CD4-positive, alpha-beta memory T cell (primary cell): ENCODE measurements at regions of chr16 and their contacts with region 1.

Region 1: DNA sequence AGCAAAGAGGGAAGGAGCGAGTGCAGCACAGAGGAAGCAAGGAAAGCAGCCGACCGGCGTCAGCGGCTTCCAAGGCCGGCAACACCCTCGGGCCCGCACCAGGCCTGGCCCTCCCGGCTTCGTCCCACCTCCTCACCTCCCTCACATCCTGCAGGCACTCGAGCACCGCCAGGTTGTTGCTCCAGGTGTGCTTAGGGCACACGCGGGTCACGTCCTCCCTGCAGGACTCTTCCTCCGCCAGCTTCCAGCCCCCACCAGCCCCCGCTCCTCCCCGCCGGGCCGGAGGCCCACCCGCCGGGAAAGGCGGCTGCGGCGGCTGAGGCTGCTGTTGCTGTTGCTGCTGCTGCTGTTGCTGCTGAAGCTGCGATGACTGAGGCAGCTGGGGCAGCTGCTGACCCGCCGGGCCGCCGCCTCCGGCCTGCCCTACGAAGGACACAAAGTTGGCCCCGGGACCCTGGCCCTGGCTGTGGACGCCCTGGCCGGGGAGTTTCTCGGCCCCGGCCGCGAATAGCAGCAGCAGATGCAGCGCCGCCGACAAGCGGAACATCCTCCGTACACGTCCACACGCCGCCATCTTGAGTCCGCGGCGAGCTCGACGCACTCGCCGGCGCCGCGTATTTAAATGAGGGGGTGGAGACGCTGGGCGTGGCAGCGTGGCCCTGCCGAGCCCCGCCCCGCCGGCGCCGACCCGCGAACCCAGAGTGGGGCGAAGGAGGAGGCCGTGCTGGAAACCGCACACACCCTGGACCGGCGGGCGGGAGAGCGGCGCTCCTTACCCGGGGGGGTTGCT is at the start of gene GLG1:
- DNase-seq: peak; percentile 89 to 92 (median 91)
- H3K4me3 ChIP-seq: peak within 1 kb of the TSS; percentile 52 to 91
- H3K4me3 Mint-ChIP-seq: peak within 1 kb of the TSS; percentile 89 to 99 (median 96)
- H3K27ac ChIP-seq: peak within 1 kb of the TSS; percentile 95
- H3K27ac Mint-ChIP-seq: peak within 1 kb of the TSS; percentile 82 to 99 (median 95)
- H3K4me1 ChIP-seq: peaks cover 77% of the 10 kb centered on the region
- H3K4me1 Mint-ChIP-seq: peaks cover 48 to 76% (median 61%) of the 10 kb centered on the region in 4 donors
- H3K27me3 ChIP-seq: no peaks in the 10 kb centered on the region
- H3K27me3 Mint-ChIP-seq: no peaks in the 10 kb centered on the region
- total RNA-seq, gene GLG1: 173 to 176 TPM

Region 2: DNA sequence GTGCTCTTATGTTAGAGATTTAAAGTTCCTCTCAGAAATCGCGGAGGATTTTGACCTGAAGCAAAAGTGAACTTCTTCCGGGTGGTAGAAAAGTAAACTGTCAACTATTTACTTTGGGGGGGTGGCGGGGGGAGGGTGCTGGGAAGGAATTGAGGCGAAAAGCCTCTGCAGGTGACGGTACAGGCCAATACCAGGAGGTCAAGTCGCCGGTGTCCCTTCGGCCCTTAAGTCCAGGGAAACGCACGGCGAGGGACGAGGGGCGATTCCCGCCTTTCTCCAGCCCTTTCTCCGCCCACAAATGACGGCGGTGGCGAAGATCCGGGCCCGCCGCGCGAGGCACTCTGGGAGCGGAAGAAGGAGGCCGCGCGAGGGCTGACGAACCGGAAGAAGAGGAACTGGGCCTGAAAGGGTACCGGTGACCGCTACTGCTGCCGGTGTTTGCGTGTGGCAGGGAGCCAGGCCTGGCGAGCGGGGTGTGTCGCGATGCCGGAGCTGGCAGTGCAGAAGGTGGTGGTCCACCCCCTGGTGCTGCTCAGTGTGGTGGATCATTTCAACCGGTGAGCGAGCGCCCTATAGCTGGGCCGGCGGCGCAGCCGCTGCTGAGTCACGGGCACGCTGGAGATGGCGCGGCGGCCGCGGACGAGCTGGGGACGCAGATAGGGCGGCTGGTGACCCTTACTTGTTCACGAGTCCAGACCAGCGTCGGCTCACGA is 310.1 kb before region 1 on chr16 and contains the start of gene PSMD7:
- CTCF ChIA-PET with region 1: no interaction called
- POLR2A ChIA-PET with region 1: interaction called, 3 read pairs
- intact Hi-C with region 1: loop called (anchors 2 kb)
- DNase-seq: peak; percentile 89 to 91 (median 91)
- H3K4me3 ChIP-seq: peak within 1 kb of the TSS; percentile 43 to 88
- H3K4me3 Mint-ChIP-seq: peak within 1 kb of the TSS; percentile 86 to 98 (median 92)
- H3K27ac ChIP-seq: peak within 1 kb of the TSS; percentile 91
- H3K27ac Mint-ChIP-seq: peak within 1 kb of the TSS; percentile 89 to 98 (median 96)
- H3K4me1 ChIP-seq: peaks cover 34% of the 10 kb centered on the region
- H3K4me1 Mint-ChIP-seq: peaks cover 10 to 50% (median 31%) of the 10 kb centered on the region in 4 donors
- H3K27me3 ChIP-seq: no peaks in the 10 kb centered on the region
- H3K27me3 Mint-ChIP-seq: no peaks in the 10 kb centered on the region
- total RNA-seq, gene PSMD7: 67.0 to 68.6 TPM

Region 3: GRCh38 chr16:74591876-74592614 is 14.7 kb before region 1 on chr16:
- CTCF ChIA-PET with region 1: no interaction called
- POLR2A ChIA-PET with region 1: interaction called, 20 read pairs
- intact Hi-C with region 1: loop called (anchors 2 kb)
- DNase-seq: no peak
- H3K4me3 ChIP-seq: no peak overlapping the region
- H3K4me3 Mint-ChIP-seq: peak overlapping the region in 4 of 8 donors; percentile 2 to 51 (median 18)
- H3K27ac ChIP-seq: no peak overlapping the region
- H3K27ac Mint-ChIP-seq: peak overlapping the region in 6 of 7 donors; percentile 14 to 79 (median 48)
- H3K4me1 ChIP-seq: peaks cover 74% of the 10 kb centered on the region
- H3K4me1 Mint-ChIP-seq: peaks cover 30 to 86% (median 51%) of the 10 kb centered on the region in 4 donors
- H3K27me3 ChIP-seq: no peaks in the 10 kb centered on the region
- H3K27me3 Mint-ChIP-seq: no peaks in the 10 kb centered on the region

Region 4: DNA sequence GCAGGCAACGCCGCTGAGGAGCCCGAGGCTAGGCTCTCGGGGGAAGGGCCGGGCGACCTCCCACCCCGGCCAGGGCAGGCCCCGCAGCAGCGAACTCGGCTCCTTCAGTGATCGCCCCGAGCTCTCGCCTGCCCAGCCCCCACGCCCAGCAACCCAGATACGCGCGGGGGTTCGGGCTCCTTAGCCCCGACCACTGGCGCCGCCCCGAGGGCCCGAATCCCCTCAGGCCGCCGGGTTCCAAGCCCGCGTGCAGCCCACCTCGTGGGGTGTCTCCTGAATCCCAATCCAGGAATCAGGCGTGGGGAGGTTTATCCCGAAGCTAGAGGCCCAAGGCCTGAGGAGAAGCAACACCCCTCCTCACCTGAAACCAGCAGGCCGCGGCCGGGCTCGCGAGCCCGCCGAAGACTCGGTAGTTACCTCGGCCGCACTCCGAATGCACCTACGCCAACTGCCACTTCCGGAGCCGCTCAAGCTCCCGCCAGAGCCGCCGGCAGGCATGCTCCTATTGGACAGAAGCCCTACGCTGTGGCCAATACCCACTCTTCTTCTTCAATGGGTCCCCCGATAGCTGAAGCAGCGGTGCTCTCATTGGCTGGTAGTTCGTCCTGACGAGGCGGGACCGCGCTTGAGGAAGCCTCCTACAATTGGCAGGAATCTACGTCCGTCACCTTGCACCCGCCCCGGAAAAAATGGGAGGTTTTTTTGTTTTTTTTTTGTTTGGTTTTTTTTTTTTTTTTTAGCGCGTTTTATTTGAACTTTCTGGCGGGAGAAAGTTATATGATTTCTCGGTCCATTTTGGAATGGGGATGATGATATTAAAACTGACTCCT is 59.9 kb after region 1 on chr16 and contains the start of gene RFWD3:
- CTCF ChIA-PET with region 1: interaction called, 3 read pairs
- POLR2A ChIA-PET with region 1: interaction called, 34 read pairs
- intact Hi-C with region 1: loop called (anchors 2 kb)
- DNase-seq: peak; percentile 95 to 99 (median 98)
- H3K4me3 ChIP-seq: peak within 1 kb of the TSS; percentile 73 to 96
- H3K4me3 Mint-ChIP-seq: peak within 1 kb of the TSS; percentile 91 to 100 (median 96)
- H3K27ac ChIP-seq: peak within 1 kb of the TSS; percentile 89
- H3K27ac Mint-ChIP-seq: peak within 1 kb of the TSS; percentile 91 to 98 (median 96)
- H3K4me1 ChIP-seq: peaks cover 33% of the 10 kb centered on the region
- H3K4me1 Mint-ChIP-seq: peaks cover 20 to 52% (median 38%) of the 10 kb centered on the region in 4 donors
- H3K27me3 ChIP-seq: no peaks in the 10 kb centered on the region
- H3K27me3 Mint-ChIP-seq: no peaks in the 10 kb centered on the region
- total RNA-seq, gene RFWD3: 59.2 to 64.7 TPM

Region 5: DNA sequence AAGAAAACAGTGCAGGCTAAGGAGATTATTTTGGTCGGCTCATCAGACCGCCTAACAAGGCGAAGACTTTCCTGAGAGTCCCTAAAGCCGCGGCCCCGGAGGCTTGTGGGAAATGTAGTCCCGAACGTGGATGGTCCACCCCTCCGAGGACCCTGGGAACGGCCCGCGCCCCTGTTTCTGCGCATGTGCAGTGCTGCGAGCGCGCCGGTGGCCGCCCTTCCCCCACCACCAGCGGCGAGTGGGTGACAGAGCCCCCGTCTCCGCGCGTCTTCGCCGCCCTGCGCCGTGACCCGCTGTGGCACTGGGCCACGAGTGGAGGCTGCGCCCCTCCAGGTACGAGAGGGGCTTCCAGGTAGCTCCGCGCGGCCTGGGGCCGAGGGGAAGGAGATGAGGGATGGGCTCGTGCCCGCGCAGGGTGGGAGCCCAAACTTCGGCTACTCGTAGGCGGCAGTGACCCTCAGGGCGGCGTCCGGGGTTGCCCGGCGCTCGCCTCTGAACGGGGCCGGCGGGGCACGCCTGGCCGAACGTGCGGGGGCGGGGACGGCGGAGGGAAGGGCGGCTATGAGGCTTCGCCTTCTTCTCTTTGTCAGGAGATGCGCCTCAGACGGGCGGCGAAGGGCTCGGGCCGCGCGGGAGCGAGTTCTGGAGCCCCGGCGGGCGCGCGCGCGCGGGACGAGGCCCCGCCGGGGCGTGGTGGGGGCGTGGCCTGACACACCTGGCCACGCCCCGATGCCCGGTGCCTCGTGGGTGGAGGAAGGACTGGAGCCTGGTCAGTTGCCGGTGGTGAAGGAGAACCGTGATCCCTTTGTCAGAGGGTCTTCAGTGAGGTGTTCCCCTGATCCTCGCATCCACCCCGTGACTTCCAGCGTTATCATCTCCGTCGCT is 541.8 kb after region 1 on chr16 and contains the start of gene ZFP1:
- CTCF ChIA-PET with region 1: no interaction called
- POLR2A ChIA-PET with region 1: no interaction called
- intact Hi-C with region 1: loop called (anchors 5 kb)
- DNase-seq: peak; percentile 92 to 96 (median 93)
- H3K4me3 ChIP-seq: peak within 1 kb of the TSS; percentile 44 to 95
- H3K4me3 Mint-ChIP-seq: peak within 1 kb of the TSS; percentile 82 to 91 (median 88)
- H3K27ac ChIP-seq: peak within 1 kb of the TSS; percentile 75
- H3K27ac Mint-ChIP-seq: peak within 1 kb of the TSS; percentile 75 to 93 (median 91)
- H3K4me1 ChIP-seq: peaks cover 5% of the 10 kb centered on the region
- H3K4me1 Mint-ChIP-seq: peaks cover 8 to 23% (median 13%) of the 10 kb centered on the region in 4 donors
- H3K27me3 ChIP-seq: no peaks in the 10 kb centered on the region
- H3K27me3 Mint-ChIP-seq: no peaks in the 10 kb centered on the region
- total RNA-seq, gene ZFP1: 11.7 to 13.4 TPM

Region 6: DNA sequence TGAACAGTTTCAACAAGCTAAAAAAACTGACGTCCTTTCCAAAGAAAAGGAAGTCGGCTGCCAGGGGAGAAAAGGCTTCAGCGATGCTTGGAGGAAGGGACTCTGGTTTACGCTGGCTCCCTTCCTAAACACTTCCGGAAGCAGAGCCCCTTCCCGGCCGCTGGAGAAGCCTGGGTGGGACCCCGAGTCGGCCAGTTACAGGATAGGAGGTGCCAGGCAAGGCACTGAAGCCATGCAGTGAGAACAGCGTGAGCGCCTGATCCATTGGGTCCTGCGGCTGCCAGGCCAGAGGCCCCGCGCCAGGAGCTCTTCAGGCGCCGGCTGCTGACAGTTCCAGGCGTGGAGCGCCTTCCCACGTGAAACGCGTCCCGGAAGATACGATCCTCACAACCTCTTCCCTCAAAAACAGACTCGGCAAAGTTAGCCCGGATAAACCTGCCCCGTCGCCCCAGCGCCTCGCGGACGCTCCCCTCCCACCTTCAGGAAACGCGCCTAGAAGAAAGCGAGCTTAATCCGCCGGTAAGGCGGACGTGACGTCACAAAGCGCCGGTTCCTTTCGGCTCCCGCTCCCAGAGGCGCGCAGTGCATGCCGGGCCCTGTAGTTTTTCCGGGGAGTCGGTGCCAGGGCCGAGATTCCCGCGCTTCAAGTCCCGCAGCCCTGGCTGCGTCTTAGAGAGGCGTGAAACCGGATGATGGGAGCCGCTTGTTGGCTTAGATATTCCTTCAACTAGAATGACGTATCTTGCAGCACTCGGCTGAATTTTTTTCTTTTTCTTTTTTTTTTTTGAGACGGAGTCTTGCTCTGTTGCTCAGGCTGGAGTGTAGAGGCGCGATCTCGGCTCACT is 1016.3 kb after region 1 on chr16 and contains the start of gene ADAT1:
- CTCF ChIA-PET with region 1: no interaction called
- POLR2A ChIA-PET with region 1: no interaction called
- intact Hi-C with region 1: loop called (anchors 2 kb)
- DNase-seq: peak; percentile 95 to 99 (median 98)
- H3K4me3 ChIP-seq: peak within 1 kb of the TSS; percentile 86 to 90
- H3K4me3 Mint-ChIP-seq: peak within 1 kb of the TSS; percentile 90 to 98 (median 97)
- H3K27ac ChIP-seq: peak within 1 kb of the TSS; percentile 96
- H3K27ac Mint-ChIP-seq: peak within 1 kb of the TSS; percentile 97 to 99 (median 98)
- H3K4me1 ChIP-seq: peaks cover 59% of the 10 kb centered on the region
- H3K4me1 Mint-ChIP-seq: peaks cover 46 to 87% (median 58%) of the 10 kb centered on the region in 4 donors
- H3K27me3 ChIP-seq: no peaks in the 10 kb centered on the region
- H3K27me3 Mint-ChIP-seq: peaks cover 0 to 3% of the 10 kb centered on the region in 2 donors
- total RNA-seq, gene ADAT1: 88.3 to 93.9 TPM